Esophagus muscularis mucosa (tissue), 4 donors: ENCODE measurements at regions of chr10 and their contacts with region 1.

Region 1: GRCh38 chr10:43671656-43672531 is 23.2 kb upstream of the ZNF32 start:
- DNase-seq: no peak
- H3K4me3 ChIP-seq: no peak overlapping the region
- H3K27ac ChIP-seq: no peak overlapping the region
- H3K4me1 ChIP-seq: peaks cover 5 to 35% (median 29%) of the 10 kb centered on the region in 4 donors
- H3K27me3 ChIP-seq: peaks cover 0 to 43% (median 8%) of the 10 kb centered on the region in 4 donors
- CTCF ChIP-seq: peak; percentile 79 to 86 (median 82)
- EP300 ChIP-seq: no peak
- POLR2A ChIP-seq: no peak

Region 2: GRCh38 chr10:44310762-44311562 is 639.1 kb after region 1 on chr10:
- intact Hi-C with region 1: loop called (anchors 5 kb)
- DNase-seq: peak; percentile 95
- H3K4me3 ChIP-seq: peak overlapping the region; percentile 40 to 59 (median 46)
- H3K27ac ChIP-seq: peak overlapping the region in 1 of 4 donors; percentile 48
- H3K4me1 ChIP-seq: peaks cover 4 to 32% (median 23%) of the 10 kb centered on the region in 4 donors
- H3K27me3 ChIP-seq: no peaks in the 10 kb centered on the region
- CTCF ChIP-seq: peak; percentile 88 to 96 (median 95)
- EP300 ChIP-seq: no peak
- POLR2A ChIP-seq: no peak

Region 3: DNA sequence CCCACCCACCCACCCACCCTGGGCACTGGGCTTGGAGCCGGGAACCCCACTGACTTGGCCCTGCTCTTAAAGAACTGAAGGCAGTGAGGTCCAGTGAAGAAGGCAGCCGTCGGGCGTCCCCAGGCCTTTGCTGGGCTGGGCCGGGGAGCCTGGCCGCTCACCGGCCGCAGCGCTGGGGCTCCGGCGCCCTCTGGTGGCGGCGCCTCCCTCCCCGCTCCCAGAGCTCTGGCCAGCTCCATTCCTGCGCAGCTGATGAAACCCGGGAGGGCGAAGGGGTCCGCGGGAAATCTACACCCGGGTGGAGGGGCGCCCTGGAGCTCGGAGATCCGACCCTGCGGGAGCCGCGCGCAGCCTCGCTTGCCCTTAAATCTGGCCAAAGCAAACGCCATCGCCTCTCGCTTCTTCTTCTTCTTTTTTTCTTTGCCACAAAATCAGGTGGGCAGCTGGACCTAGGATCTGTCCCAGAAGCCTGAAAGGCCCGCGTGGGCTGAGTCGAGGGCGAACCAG is 714.7 kb after region 1 on chr10:
- intact Hi-C with region 1: loop called (anchors 1 kb)
- DNase-seq: no peak
- H3K4me3 ChIP-seq: peak overlapping the region in 1 of 4 donors; percentile 17
- H3K27ac ChIP-seq: peak overlapping the region in 1 of 4 donors; percentile 78
- H3K4me1 ChIP-seq: peaks cover 4 to 49% (median 44%) of the 10 kb centered on the region in 4 donors
- H3K27me3 ChIP-seq: peaks cover 0 to 44% (median 2%) of the 10 kb centered on the region in 4 donors
- CTCF ChIP-seq: peak; percentile 77 to 92 (median 85)
- EP300 ChIP-seq: no peak
- POLR2A ChIP-seq: no peak

Region 4: DNA sequence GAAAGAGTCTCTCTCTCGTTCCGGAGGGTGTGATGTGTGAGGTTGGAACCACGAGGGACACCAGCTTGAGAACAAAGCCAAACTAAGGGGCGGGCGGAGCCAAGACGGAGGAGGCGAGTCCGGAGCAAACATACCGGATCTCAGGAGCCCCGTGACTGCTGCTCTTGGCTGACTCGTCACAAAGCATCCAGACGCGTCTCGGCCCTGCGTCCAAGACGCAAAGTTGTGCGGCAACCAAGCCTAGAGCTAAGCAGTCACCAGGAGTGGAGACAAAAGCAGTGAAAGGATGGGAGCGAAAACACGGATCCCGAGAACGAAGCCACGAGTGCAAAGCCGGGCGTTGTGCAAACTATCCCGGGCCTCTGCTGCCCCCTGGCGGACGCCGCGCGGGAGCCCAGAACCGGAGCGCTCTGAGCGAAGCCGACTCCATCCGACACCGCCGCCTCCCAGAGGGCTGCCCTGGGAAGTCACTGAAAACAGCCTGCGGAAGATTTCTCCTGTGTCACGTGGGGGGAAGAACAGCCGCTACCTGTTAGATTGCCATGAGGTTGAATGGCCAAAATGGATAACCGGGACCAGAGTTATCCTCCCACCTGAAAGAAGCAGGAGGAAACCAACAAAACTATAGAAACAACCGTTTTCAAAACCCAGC is 1192.9 kb after region 1 on chr10:
- intact Hi-C with region 1: loop called (anchors 5 kb)
- DNase-seq: peak; percentile 98
- H3K4me3 ChIP-seq: peak overlapping the region; percentile 54 to 68 (median 60)
- H3K27ac ChIP-seq: peak overlapping the region; percentile 73 to 81 (median 80)
- H3K4me1 ChIP-seq: peaks cover 8 to 24% (median 20%) of the 10 kb centered on the region in 4 donors
- H3K27me3 ChIP-seq: no peaks in the 10 kb centered on the region
- CTCF ChIP-seq: peak; percentile 92 to 99 (median 99)
- EP300 ChIP-seq: no peak
- POLR2A ChIP-seq: no peak